ENCODE measurements at regions of chr2 and their contacts with region 1.

Region 1: GRCh38 chr2:189698020-189698887 is 23.8 kb downstream of the ANKAR start:
- DNase-seq: peak; percentile 26
- H3K4me3 ChIP-seq: no peak overlapping the region
- H3K27ac ChIP-seq: no peak overlapping the region
- H3K4me1 ChIP-seq: no peaks in the 10 kb centered on the region
- H3K27me3 ChIP-seq: no peaks in the 10 kb centered on the region
- CTCF ChIP-seq: peak; percentile 72
- EP300 ChIP-seq: no peak
- RAD21 ChIP-seq: peak; percentile 48

Region 2: GRCh38 chr2:188776634-188777033 is 921.6 kb before region 1 on chr2:
- CTCF ChIA-PET with region 1: no interaction called
- POLR2A ChIA-PET with region 1: no interaction called
- DNase-seq: no peak
- H3K4me3 ChIP-seq: no peak overlapping the region
- H3K27ac ChIP-seq: peak overlapping the region in 1 of 2 experiments; percentile 77; a peak in 2 of 4 replicates
- H3K4me1 ChIP-seq: peaks cover 0 to 15% of the 10 kb centered on the region in 2 experiments; a peak in 2 of 4 replicates
- H3K27me3 ChIP-seq: no peaks in the 10 kb centered on the region
- CTCF ChIP-seq: no peak
- EP300 ChIP-seq: peak in 1 of 2 experiments; percentile 46; a peak in 1 of 4 replicates
- RAD21 ChIP-seq: no peak

Region 3: GRCh38 chr2:189674374-189675112 is 23.7 kb before region 1 on chr2 and contains the start of gene ANKAR:
- CTCF ChIA-PET with region 1: interaction called, 12 read pairs
- POLR2A ChIA-PET with region 1: no interaction called
- DNase-seq: peak; percentile 93
- H3K4me3 ChIP-seq: peak within 1 kb of the TSS; percentile 69 to 76
- H3K27ac ChIP-seq: peak within 1 kb of the TSS; percentile 84 to 90
- H3K4me1 ChIP-seq: peaks cover 0 to 6% of the 10 kb centered on the region in 2 experiments; a peak in 2 of 4 replicates
- H3K27me3 ChIP-seq: no peaks in the 10 kb centered on the region
- CTCF ChIP-seq: peak; percentile 84
- EP300 ChIP-seq: no peak
- RAD21 ChIP-seq: peak; percentile 49
- polyA plus RNA-seq, gene ANKAR: 1.6 and 2.1 TPM in 2 replicates

Region 4: GRCh38 chr2:189709501-189710221 is 11.4 kb after region 1 on chr2:
- CTCF ChIA-PET with region 1: interaction called, 12 read pairs
- POLR2A ChIA-PET with region 1: no interaction called
- DNase-seq: peak; percentile 44
- H3K4me3 ChIP-seq: no peak overlapping the region
- H3K27ac ChIP-seq: peak overlapping the region in 1 of 2 experiments; percentile 43; a peak in 2 of 4 replicates
- H3K4me1 ChIP-seq: no peaks in the 10 kb centered on the region; a peak in 1 of 4 replicates
- H3K27me3 ChIP-seq: no peaks in the 10 kb centered on the region
- CTCF ChIP-seq: no peak
- EP300 ChIP-seq: no peak
- RAD21 ChIP-seq: no peak